ENCODE measurements at regions of chrX and their contacts with region 1.

Region 1: DNA sequence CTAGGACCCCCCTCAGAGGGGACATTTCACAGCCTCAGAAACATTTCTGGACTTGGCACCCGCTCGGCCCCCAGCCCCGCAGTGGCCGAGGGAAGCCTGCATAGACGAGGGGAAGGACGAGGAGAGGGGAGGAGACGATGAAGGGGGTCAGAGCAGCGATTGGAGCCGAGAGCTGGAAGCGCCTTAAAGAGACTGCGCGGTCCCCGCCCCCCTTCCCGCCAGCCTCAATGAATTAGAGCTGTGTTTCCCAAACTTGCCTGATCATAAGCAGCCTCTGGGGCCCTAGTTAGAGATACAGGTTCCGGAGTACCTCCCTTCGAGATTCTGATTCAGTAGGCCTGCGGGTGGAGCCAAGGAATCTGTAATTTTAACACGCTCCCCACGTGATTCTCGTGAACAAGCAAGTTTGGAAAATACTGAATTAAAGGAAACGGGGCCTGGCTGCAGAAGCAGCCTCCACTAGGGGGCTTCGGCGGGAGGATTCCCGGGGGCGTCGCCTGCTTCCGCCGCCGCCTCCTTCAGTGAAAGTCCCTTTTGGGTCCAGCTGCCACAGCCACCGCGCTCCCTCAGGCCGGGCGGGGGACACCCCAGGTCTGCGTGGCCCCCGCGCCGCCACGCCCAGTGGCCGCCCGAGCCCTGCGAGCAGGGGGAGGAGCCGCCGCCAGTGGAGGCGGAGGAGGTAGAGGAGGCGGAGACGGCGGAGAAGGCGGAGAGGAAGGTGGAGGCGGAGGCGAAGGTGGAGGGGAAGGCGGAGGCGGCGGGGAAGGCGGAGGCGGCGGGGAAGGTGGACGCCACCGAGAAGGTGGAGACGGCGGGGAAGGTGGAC is at the start of gene USP27X:
- DNase-seq: peak; percentile 79 to 94 (median 92)
- H3K4me3 ChIP-seq: peak within 1 kb of the TSS; percentile 30 to 82 (median 64)
- H3K27ac ChIP-seq: peak within 1 kb of the TSS in 1 of 2 experiments; percentile 51
- H3K4me1 ChIP-seq: peaks cover 0 to 26% (median 12%) of the 10 kb centered on the region in 4 experiments
- H3K27me3 ChIP-seq: no peaks in the 10 kb centered on the region

Region 2: DNA sequence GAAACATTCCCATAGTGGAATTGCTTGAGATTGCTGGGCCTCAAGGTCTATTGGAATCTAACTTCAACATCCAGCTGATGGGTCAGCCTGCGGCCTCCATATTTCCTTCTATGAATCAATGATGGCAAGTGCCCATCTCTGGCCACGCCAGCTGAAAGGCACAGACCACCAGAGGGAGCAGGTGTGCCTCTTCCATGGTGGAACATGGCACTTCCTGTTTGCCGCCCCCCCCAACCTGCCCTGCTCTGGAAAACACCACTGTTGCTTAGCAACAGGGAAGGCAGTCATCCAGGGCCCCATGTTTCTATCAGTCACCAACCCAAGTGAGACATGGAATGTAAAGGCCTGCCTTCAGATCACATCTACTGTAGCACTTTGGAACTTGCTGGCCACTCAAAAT is 38.4 kb before region 1 on chrX:
- CTCF ChIA-PET with region 1: interaction called, 31 read pairs
- POLR2A ChIA-PET with region 1: interaction called, 4 read pairs
- DNase-seq: peak; percentile 77 to 90 (median 89)
- H3K4me3 ChIP-seq: no peak overlapping the region
- H3K27ac ChIP-seq: no peak overlapping the region
- H3K4me1 ChIP-seq: peaks cover 0 to 5% (median 0%) of the 10 kb centered on the region in 4 experiments
- H3K27me3 ChIP-seq: peaks cover 0 to 5% (median 0%) of the 10 kb centered on the region in 5 experiments

Region 3: GRCh38 chrX:49915361-49916222 is 36.5 kb after region 1 on chrX:
- CTCF ChIA-PET with region 1: interaction called, 27 read pairs
- POLR2A ChIA-PET with region 1: no interaction called
- DNase-seq: peak; percentile 42 to 77 (median 74)
- H3K4me3 ChIP-seq: no peak overlapping the region
- H3K27ac ChIP-seq: no peak overlapping the region
- H3K4me1 ChIP-seq: peaks cover 0 to under 1% (median under 1%) of the 10 kb centered on the region in 4 experiments
- H3K27me3 ChIP-seq: peaks cover 0 to 6% (median 0%) of the 10 kb centered on the region in 5 experiments

Region 4: GRCh38 chrX:49922291-49923241 is 43.5 kb after region 1 on chrX and contains the start of gene CLCN5:
- CTCF ChIA-PET with region 1: interaction called, 27 read pairs
- POLR2A ChIA-PET with region 1: no interaction called
- DNase-seq: peak; percentile 93 to 97 (median 97)
- H3K4me3 ChIP-seq: peak within 1 kb of the TSS; percentile 46 to 80 (median 69)
- H3K27ac ChIP-seq: peak within 1 kb of the TSS in 1 of 2 experiments; percentile 52
- H3K4me1 ChIP-seq: peaks cover 0 to 16% (median 2%) of the 10 kb centered on the region in 4 experiments
- H3K27me3 ChIP-seq: peaks cover 0 to 11% (median 2%) of the 10 kb centered on the region in 5 experiments